Heart left ventricle (tissue), 16 donors: ENCODE measurements at regions of chr18 and their contacts with region 1.

Region 1: DNA sequence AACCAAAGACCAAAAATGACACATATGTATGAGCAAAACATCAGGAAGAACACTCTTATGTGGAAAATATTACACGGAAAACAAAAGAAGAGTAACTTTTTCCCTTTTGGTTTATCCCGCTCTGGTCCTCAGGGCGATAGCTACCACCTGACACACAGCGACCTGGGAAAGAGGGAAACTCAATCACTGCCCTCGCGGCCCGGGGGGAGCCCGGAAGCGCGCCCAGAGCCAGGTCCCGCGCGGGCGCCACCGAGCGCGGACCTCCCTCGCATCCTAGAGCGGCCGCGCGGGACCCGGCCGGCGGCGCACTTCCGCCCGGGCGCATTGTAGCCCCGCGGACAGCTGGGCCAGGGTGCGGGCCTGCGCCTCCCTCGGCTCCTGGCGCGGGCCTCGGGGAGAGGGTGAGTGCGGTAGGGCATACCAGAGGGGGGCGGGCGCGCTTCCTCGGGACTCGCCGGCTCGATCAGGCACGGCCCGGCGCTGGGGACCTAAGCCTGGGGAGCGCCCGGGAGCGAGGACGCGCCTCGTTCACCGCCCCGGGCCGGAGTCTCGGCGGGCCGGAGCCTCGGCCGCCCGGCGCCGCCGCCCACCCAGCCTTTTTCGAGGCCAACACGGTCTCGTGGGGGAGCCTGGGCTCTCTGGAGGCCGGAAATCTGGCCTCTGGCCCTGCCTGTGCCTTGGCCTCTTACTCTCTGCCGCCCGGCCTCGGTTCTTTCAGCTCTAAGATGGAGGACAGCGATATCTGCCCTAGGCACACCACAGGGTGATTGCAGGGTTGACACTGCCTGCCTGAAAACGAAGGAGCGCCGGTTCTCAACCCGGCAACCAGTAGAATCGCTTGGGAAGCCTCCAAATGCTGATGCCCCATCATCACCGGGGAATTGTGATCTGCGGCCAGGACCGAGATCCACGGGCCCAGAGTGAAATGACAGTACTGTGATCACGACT is at the start of gene ELAC1:
- DNase-seq: peak; percentile 76 to 89 (median 79)
- ATAC-seq: peak; percentile 85 to 99 (median 98)
- H3K4me3 ChIP-seq: peak within 1 kb of the TSS; percentile 80 to 98 (median 90)
- H3K27ac ChIP-seq: peak within 1 kb of the TSS; percentile 95 to 100 (median 98)
- H3K4me1 ChIP-seq: peaks cover 0 to 26% (median 16%) of the 10 kb centered on the region in 12 donors
- H3K27me3 ChIP-seq: no peaks in the 10 kb centered on the region
- CTCF ChIP-seq: peak in 4 of 12 donors; percentile 12 to 30 (median 18)
- POLR2A ChIP-seq: peak in 1 of 2 donors; percentile 89
- total RNA-seq, gene ELAC1: 3.0 to 7.2 (median 4.0) TPM

Region 2: DNA sequence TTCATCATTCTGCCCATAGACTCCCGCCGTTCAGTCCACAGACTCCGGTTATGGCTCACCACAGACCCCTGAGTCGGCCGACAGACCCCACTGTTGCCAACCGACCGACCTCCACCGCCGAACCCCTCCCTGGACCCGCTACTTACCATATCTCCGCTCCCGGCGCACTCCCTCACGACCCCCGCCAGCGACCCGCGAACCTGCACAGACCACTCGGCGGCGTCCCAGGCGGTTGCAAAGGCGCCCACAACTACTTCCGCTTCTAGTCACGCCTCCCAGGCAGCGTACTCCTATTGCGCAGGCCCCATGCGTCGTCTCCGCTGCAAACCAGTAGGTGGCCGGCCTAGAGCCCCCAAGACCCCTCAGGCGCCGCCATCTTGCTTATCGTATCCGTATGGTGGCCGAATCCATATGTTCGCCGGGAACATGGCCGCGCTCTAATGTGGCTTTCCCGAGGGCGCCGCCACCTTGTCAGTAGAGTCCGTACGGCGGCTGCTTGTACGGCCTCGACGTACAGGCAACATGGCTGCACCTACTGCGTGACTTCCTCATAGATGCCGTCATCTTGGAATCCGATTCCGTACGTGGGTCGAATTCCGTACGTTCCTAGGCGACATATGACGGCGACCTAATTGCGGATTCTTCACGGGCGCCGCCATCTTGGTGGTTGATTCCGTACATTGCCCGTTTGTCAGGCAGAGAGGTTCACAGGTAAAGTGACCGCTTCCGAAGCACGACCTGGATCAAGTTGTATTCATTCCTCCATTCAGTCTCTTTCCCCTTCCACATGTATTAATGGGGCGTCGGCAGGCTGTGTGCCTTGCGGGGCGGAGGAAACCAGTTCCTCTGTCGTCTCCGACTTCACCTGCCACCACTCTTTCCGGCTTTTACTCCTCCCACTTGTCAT is 680.3 kb before region 1 on chr18 and contains the start of gene CXXC1:
- intact Hi-C with region 1: loop called in 1 of 10 experiments (anchors 10 kb)
- DNase-seq: peak; percentile 97 to 99 (median 98)
- ATAC-seq: peak; percentile 95 to 97 (median 96)
- H3K4me3 ChIP-seq: peak within 1 kb of the TSS; percentile 55 to 90 (median 77)
- H3K27ac ChIP-seq: peak within 1 kb of the TSS; percentile 45 to 94 (median 86)
- H3K4me1 ChIP-seq: peaks cover 0 to 20% (median 0%) of the 10 kb centered on the region in 12 donors
- H3K27me3 ChIP-seq: no peaks in the 10 kb centered on the region
- CTCF ChIP-seq: peak; percentile 36 to 63 (median 48)
- POLR2A ChIP-seq: peak in 1 of 2 donors; percentile 44
- total RNA-seq, gene CXXC1: 18.3 to 36.7 (median 33.2) TPM

Region 3: GRCh38 chr18:51029694-51030536 is 61.9 kb after region 1 on chr18 and contains the start of gene SMAD4:
- intact Hi-C with region 1: loop called in 7 of 10 experiments (anchors 2 to 10 kb)
- DNase-seq: peak; percentile 96 to 99 (median 97)
- ATAC-seq: peak; percentile 95 to 98 (median 96)
- H3K4me3 ChIP-seq: peak within 1 kb of the TSS; percentile 54 to 97 (median 79)
- H3K27ac ChIP-seq: peak within 1 kb of the TSS; percentile 92 to 99 (median 98)
- H3K4me1 ChIP-seq: peaks cover 11 to 75% (median 46%) of the 10 kb centered on the region in 12 donors
- H3K27me3 ChIP-seq: no peaks in the 10 kb centered on the region
- CTCF ChIP-seq: peak in 1 of 12 donors; percentile 13
- POLR2A ChIP-seq: peak in 1 of 2 donors; percentile 86
- total RNA-seq, gene SMAD4: 78.6 to 103 (median 92.0) TPM

Region 4: GRCh38 chr18:51044928-51045585 is 77.1 kb after region 1 on chr18:
- intact Hi-C with region 1: loop called in 5 of 10 experiments (anchors 5 to 10 kb)
- DNase-seq: no peak
- ATAC-seq: peak in 2 of 4 donors; percentile 28 to 47
- H3K4me3 ChIP-seq: peak overlapping the region in 2 of 12 donors; percentile 1 to 3
- H3K27ac ChIP-seq: peak overlapping the region in 3 of 12 donors; percentile 33 to 50 (median 33)
- H3K4me1 ChIP-seq: peaks cover 6 to 70% (median 53%) of the 10 kb centered on the region in 12 donors
- H3K27me3 ChIP-seq: no peaks in the 10 kb centered on the region
- CTCF ChIP-seq: no peak
- POLR2A ChIP-seq: no peak

Region 5: DNA sequence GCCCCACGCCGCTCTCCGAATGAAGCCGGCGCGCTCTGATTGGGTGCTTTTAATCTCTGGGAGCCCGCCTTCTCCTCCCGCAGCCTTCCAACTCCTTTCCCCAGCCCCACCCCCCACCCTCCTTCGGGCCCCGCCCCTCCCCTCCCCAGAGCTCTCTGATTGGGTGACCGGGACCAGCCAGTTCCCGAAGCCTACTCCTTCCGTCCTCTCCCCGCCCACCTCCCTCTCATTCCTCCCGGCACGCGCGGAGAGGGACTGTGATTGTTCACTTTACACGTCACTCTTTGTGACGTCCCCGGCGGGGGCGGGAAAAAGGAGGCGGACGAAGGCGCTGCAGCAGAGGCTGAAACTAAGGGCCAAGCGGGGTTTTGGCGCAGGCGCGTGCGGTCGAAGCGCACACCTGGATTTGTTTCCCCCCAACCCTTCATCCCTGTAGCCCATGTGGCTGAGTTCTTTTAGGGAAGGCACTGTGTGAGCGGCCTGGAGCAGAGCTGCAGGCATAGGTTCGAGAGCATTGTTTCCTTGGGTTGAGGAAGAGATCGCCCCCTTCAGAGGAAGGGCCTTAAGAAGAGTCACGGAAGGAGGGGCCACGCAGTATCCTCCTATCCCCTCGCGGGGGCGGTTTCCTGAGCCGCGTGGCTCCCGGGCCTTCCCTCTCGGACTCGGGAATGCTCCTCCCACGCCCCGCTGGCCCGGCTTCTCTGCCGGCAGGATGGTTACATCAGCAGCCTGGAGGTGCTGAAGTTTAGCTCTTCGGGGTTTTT is 229.9 kb after region 1 on chr18 and contains the start of gene MEX3C:
- intact Hi-C with region 1: loop called in 1 of 10 experiments (anchors 5 kb)
- DNase-seq: peak; percentile 99 to 100 (median 99)
- ATAC-seq: peak; percentile 95 to 97 (median 97)
- H3K4me3 ChIP-seq: peak within 1 kb of the TSS; percentile 64 to 99 (median 88)
- H3K27ac ChIP-seq: peak within 1 kb of the TSS; percentile 92 to 99 (median 96)
- H3K4me1 ChIP-seq: peaks cover 1 to 29% (median 26%) of the 10 kb centered on the region in 12 donors
- H3K27me3 ChIP-seq: no peaks in the 10 kb centered on the region
- CTCF ChIP-seq: peak in 11 of 12 donors; percentile 15 to 68 (median 37)
- POLR2A ChIP-seq: peak in 1 of 2 donors; percentile 43
- total RNA-seq, gene MEX3C: 15.1 to 28.2 (median 20.7) TPM

Region 6: GRCh38 chr18:51251625-51252024 is 283.6 kb after region 1 on chr18:
- intact Hi-C with region 1: no loop called
- DNase-seq: no peak
- ATAC-seq: no peak
- H3K4me3 ChIP-seq: no peak overlapping the region
- H3K27ac ChIP-seq: no peak overlapping the region
- H3K4me1 ChIP-seq: no peaks in the 10 kb centered on the region
- H3K27me3 ChIP-seq: peaks cover 0 to 6% (median 0%) of the 10 kb centered on the region in 9 donors
- CTCF ChIP-seq: no peak
- POLR2A ChIP-seq: no peak